ENCODE measurements at regions of chr22 and their contacts with region 1.

Region 1: GRCh38 chr22:36731916-36732315 is 28.4 kb upstream of the CACNG2 start:
- DNase-seq: peak; percentile 73

Region 2: DNA sequence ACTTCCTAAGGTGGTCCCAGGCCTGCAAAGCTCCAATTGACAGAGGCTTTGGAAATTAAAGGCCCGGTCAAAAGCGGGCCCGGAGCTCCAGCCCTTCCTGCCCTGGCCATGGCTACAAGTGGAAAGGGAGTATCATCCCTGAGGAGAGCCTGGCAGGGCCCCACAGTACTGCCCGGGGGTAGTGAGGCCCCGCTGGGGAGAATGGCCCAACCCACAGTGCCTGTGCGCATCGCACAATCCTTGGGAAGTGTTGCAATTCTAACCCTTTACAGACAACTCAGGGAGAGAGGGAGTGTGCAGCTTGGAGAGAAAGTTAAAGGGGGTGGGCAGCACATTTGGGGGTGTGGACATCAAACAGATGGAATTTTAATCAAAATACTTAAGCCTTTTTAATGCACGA is 32.0 kb before region 1 on chr22:
- intact Hi-C with region 1: no loop called
- DNase-seq: no peak

Region 3: GRCh38 chr22:36775964-36776669 is 44.2 kb after region 1 on chr22 and contains the start of gene IFT27:
- intact Hi-C with region 1: loop called in 1 of 2 experiments (anchors 1 kb)
- DNase-seq: peak; percentile 99
- total RNA-seq, gene IFT27: 12.3 to 18.6 TPM

Region 4: DNA sequence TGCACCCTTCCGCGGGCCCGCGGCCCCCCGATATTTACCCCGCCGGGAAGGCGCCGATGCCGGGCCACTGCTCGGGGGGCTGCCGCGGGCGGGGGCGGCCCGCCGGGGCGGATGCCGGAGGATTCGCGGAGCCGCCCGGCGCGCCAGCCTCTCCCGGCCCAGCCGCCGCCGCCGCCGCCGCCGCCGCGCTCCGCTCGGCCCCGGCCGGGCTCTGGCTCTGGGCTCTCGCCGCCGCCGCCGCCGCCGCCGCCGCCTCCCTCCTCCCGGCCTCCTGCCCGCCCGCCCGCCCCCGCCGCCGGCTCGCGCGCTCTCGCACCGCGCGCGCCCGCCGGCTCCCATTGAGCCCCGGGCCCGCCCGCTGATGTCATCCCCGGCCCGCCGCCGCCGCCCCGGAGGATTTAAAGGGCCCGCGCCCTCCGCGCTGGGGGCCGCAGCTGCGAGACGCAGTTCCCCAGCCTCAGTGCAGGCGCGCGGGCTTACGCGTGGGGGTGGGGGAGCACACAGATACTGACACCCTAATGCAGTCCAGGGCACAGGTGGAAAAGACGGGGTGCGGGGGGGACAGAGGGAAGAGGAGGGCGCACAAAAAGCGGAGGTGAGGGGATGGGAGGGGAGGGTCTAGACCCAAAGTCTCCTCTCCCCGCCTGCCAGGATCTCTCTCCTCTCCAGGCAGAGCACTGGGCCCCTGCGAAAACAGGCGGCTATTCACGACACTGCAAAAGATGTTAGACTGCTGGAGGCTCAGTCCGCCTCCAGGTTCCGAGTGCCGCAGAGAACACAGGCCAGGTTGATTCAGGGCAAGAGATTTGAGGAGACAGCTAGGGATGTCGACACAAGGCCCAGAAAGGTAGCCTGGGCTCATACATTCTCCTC is 1585.4 kb after region 1 on chr22 and contains the start of gene CSNK1E:
- intact Hi-C with region 1: no loop called
- DNase-seq: peak; percentile 93
- total RNA-seq, gene CSNK1E: 70.1 to 88.6 TPM